HEK293 (cell line): ENCODE measurements at regions of chr1 and their contacts with region 1.

Region 1: GRCh38 chr1:31166462-31166861 is 73.2 kb downstream of the NKAIN1 start:
- H3K4me3 ChIP-seq: no peak overlapping the region
- H3K27ac ChIP-seq: no peak overlapping the region
- H3K4me1 ChIP-seq: no peaks in the 10 kb centered on the region
- CTCF ChIP-seq: no peak

Region 2: GRCh38 chr1:30492451-30492850 is 674.0 kb before region 1 on chr1:
- CTCF ChIA-PET with region 1: no interaction called
- POLR2A ChIA-PET with region 1: no interaction called
- H3K4me3 ChIP-seq: no peak overlapping the region
- H3K27ac ChIP-seq: no peak overlapping the region
- H3K4me1 ChIP-seq: no peaks in the 10 kb centered on the region
- CTCF ChIP-seq: no peak

Region 3: DNA sequence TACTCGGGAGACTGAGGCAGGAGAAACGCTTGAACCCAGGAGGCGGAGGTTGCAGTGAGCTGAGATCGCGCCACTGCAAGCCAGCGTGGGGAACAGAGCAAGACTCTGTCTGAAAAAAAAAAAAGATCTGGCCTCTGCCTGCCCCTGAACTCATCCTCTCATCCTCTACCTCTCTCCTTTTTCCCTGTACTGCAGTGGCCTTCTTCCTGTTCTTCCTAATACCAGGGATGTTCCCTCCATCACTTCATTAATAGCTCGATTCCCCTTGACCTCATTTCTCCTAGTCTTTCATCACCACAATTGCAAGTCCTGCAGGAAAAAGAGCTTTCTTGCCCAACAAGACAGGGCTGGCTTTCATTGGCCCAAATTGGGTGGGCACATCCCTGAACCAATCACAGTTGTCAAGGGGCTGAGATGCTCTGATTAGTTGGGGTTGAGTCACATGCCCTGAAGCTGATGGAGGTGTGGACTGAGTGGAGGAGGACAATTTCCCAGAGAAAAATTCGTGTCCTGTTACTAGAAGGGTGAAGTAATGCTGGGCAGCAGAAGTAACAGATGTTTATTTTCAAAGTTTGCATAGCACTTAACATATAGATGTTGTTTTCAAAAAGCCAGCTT is 14.2 kb before region 1 on chr1:
- CTCF ChIA-PET with region 1: interaction called, 13 read pairs
- POLR2A ChIA-PET with region 1: interaction called, 5 read pairs
- H3K4me3 ChIP-seq: no peak overlapping the region
- H3K27ac ChIP-seq: no peak overlapping the region
- H3K4me1 ChIP-seq: no peaks in the 10 kb centered on the region
- CTCF ChIP-seq: no peak

Region 4: DNA sequence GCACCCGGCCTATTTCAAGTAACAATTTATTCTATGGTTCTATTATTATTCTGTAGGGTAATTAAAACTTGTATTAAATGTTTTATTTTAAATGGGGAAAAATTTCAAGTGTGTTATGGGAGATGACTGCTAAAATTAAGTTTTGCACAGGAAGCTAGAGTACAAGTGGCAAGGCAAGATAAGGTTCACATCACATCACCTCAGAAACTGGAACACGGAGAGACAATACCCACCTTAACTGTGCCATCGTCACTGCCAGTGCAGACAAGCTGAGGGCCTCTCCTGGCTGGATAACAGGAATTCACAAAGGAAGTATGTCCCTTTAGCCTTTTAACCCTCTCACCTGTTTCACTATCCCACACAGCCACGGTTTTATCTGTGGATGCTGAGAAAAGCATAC is 122.6 kb after region 1 on chr1:
- CTCF ChIA-PET with region 1: no interaction called
- POLR2A ChIA-PET with region 1: no interaction called
- H3K4me3 ChIP-seq: no peak overlapping the region
- H3K27ac ChIP-seq: no peak overlapping the region
- H3K4me1 ChIP-seq: no peaks in the 10 kb centered on the region
- CTCF ChIP-seq: no peak